ENCODE measurements at regions of chr11 and their contacts with region 1.

Region 1: DNA sequence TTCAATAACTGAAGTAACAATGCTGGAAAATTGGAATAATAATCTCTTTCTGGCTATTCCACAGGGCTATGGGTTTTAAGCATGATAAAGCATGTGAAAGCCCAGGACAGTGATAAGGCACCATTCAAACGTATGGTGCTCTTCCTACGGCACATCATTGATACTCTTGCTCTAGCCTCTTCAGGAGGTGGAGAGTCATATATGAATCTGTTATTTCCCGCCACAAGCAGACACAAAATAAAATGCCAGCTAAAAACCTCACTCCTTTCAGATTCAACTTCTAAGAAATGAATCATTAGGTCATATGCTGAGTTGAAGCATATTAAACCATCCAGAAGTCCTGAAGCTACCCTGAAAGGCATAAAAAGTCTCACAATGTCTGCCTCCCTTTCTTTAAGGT is 49.9 kb downstream of the FZD4 start:
- DNase-seq: no peak
- H3K4me3 Mint-ChIP-seq: no peak overlapping the region
- H3K27ac Mint-ChIP-seq: no peak overlapping the region
- H3K4me1 Mint-ChIP-seq: no peaks in the 10 kb centered on the region
- H3K27me3 Mint-ChIP-seq: peaks cover 9% of the 10 kb centered on the region

Region 2: DNA sequence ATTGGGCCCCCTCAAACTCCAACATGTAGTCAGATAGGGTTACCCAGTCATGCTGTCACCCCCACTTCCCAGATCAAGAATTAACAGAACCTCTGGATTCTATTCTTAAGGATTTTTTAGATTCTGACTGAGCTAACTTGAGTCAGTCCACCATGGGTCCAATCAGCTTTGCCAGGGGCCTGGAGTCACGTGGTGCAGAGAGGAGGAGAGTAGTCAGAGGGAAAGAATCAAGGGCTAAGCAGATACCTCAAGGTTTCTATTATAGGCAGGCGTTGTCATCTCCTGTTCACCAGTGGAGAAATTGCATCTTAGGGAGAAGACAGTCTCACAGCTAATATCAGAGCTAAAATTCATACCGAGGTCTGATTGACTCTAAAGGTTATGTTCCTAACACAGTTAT is 21.7 kb after region 1 on chr11:
- intact Hi-C with region 1: loop called (anchors 1 kb)
- DNase-seq: no peak
- H3K4me3 Mint-ChIP-seq: no peak overlapping the region
- H3K27ac Mint-ChIP-seq: no peak overlapping the region
- H3K4me1 Mint-ChIP-seq: no peaks in the 10 kb centered on the region
- H3K27me3 Mint-ChIP-seq: peaks cover 6% of the 10 kb centered on the region

Region 3: DNA sequence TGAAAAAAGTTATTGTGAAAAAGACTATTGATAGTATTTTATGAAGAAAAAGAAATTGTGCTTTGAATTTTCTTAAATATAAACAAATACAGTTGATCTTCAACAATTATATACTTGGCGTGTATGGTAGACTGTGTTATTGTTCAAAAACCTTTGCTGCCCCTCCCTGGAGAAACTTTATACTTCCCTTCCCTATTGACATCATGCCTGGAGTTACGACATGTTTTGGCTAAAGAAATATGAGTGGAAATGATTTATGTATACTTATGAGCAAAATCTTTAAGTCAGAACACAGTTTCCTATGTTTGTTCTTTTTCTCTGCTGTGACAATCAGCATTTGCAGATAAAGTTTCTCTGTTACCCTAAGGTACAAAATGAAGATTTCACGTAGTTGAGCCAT is 376.2 kb after region 1 on chr11:
- intact Hi-C with region 1: no loop called
- DNase-seq: no peak
- H3K4me3 Mint-ChIP-seq: no peak overlapping the region
- H3K27ac Mint-ChIP-seq: no peak overlapping the region
- H3K4me1 Mint-ChIP-seq: no peaks in the 10 kb centered on the region
- H3K27me3 Mint-ChIP-seq: no peaks in the 10 kb centered on the region

Measured in activated T-helper 1 cell treated with anti-CD3 and anti-CD28 coated beads, Interleukin-12 subunit alpha, Interleukin-12 subunit beta, Interleukin-2, Interleukin-4 antibody, amounts not matched to agents 30 ng/mL and 10 ng/mL and 1 ng/mL, durations not matched to agents 14 hours and 24 hours and 36 hours (primary cell).